ENCODE measurements at regions of chr9 and their contacts with region 1.

Region 1: GRCh38 chr9:109880277-109881169 is 100.5 kb downstream of the PALM2AKAP2 start:
- DNase-seq: peak; percentile 39 to 72
- H3K4me3 ChIP-seq: no peak overlapping the region
- H3K27ac ChIP-seq: no peak overlapping the region
- H3K4me1 ChIP-seq: peaks cover 0 to 4% (median 0%) of the 10 kb centered on the region in 4 experiments; a peak in 3 of 7 replicates
- H3K27me3 ChIP-seq: no peaks in the 10 kb centered on the region
- CTCF ChIP-seq: peak in 2 of 3 experiments; percentile 48 to 78; a peak in 3 of 4 replicates
- EP300 ChIP-seq: no peak
- POLR2A ChIP-seq: no peak
- RAD21 ChIP-seq: peak; percentile 38 to 46; a peak in 3 of 4 replicates

Region 2: GRCh38 chr9:109542906-109543305 is 337.6 kb before region 1 on chr9:
- CTCF ChIA-PET with region 1: no interaction called
- POLR2A ChIA-PET with region 1: no interaction called
- DNase-seq: no peak
- H3K4me3 ChIP-seq: no peak overlapping the region
- H3K27ac ChIP-seq: no peak overlapping the region
- H3K4me1 ChIP-seq: no peaks in the 10 kb centered on the region
- H3K27me3 ChIP-seq: no peaks in the 10 kb centered on the region; a peak in 1 of 7 replicates
- CTCF ChIP-seq: no peak
- EP300 ChIP-seq: no peak
- POLR2A ChIP-seq: no peak
- RAD21 ChIP-seq: no peak

Region 3: DNA sequence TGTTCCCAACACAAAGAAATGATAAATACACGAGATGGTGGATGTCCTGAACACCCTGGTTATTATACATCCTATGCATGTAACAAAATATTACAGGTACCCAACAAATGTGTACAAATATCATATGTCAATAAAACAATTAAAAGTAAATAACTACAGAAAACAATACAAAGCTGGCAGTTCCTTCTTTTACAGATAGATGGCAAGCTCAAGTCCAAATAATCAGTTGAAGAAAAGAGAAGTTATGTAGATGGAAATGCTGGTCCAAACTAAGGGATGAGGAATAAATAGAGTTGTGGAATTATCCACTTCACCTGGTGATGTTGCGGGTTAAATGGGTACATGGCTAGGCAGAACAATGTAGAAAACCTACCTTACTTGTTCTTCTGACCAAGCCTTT is 21.1 kb before region 1 on chr9:
- CTCF ChIA-PET with region 1: interaction called, 12 read pairs
- POLR2A ChIA-PET with region 1: no interaction called
- DNase-seq: no peak
- H3K4me3 ChIP-seq: no peak overlapping the region
- H3K27ac ChIP-seq: no peak overlapping the region
- H3K4me1 ChIP-seq: peaks cover 0 to 4% (median 1%) of the 10 kb centered on the region in 4 experiments; a peak in 3 of 7 replicates
- H3K27me3 ChIP-seq: no peaks in the 10 kb centered on the region
- CTCF ChIP-seq: no peak
- EP300 ChIP-seq: no peak
- POLR2A ChIP-seq: no peak
- RAD21 ChIP-seq: no peak

Region 4: DNA sequence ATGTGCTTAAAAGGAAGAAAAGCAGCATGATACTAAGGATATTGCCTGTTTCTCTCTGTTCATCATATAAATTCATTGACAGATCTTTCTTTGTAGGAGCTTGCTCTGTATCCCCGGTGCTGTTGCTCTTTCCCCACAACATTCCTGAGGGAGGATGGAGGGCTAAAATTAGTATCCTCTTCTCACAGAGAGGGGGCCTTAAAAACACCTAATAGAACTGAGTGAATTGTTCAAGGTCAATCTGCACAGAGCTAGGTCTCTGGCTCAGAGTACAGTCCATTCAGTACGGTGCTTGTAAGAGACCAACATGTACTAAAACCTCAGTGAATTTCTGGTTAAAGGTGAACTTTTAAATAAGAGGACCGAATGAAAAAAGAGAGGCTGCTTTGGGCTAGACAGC is 11.8 kb before region 1 on chr9:
- CTCF ChIA-PET with region 1: interaction called, 15 read pairs
- POLR2A ChIA-PET with region 1: no interaction called
- DNase-seq: no peak
- H3K4me3 ChIP-seq: no peak overlapping the region
- H3K27ac ChIP-seq: no peak overlapping the region
- H3K4me1 ChIP-seq: peaks cover 0 to 4% (median 0%) of the 10 kb centered on the region in 4 experiments; a peak in 1 of 7 replicates
- H3K27me3 ChIP-seq: no peaks in the 10 kb centered on the region
- CTCF ChIP-seq: no peak
- EP300 ChIP-seq: no peak
- POLR2A ChIP-seq: no peak
- RAD21 ChIP-seq: no peak

Region 5: DNA sequence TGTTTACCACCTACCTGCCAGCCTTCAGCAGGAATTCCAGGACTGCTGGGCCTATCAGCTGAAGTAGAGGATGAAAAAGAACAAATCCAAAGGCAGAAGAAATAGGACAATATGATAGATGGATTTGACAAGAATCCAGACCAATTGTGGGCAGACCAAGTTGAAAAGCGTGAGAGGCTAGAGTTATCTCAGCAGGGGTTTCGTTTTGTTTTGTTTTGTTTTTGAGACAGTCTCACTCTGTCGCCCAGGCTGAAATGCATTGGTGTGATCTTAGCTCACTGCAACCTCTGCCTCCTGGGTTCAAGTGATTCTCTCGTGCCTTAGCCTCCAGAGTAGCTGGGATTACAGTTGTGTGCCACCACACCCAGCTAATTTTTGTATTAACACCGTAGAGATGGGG is 12.7 kb after region 1 on chr9:
- CTCF ChIA-PET with region 1: interaction called, 14 read pairs
- POLR2A ChIA-PET with region 1: no interaction called
- DNase-seq: no peak
- H3K4me3 ChIP-seq: no peak overlapping the region
- H3K27ac ChIP-seq: no peak overlapping the region
- H3K4me1 ChIP-seq: peaks cover 0 to 2% (median 0%) of the 10 kb centered on the region in 4 experiments; a peak in 1 of 7 replicates
- H3K27me3 ChIP-seq: no peaks in the 10 kb centered on the region
- CTCF ChIP-seq: no peak
- EP300 ChIP-seq: no peak
- POLR2A ChIP-seq: no peak
- RAD21 ChIP-seq: no peak

Region 6: DNA sequence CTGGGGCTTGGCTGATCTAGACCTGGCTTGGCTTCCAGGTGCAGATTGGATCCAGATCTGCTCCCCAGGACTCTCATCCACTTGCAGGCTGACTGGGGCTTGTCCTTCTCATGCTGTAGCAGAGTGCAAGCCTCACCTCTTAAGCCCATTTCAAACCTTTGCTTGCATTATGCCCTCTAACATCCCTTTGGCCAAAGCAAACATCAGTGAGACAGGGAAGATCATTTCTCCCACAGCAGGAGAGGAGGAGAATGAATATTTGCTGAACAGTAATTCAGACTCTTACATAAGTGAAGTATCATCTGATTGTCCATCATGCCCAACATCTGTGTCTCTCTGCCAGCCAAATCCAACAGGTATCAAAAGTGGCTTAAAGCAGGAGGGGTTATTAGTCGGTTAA is 132.5 kb after region 1 on chr9:
- CTCF ChIA-PET with region 1: no interaction called
- POLR2A ChIA-PET with region 1: no interaction called
- DNase-seq: no peak
- H3K4me3 ChIP-seq: no peak overlapping the region
- H3K27ac ChIP-seq: no peak overlapping the region
- H3K4me1 ChIP-seq: no peaks in the 10 kb centered on the region
- H3K27me3 ChIP-seq: no peaks in the 10 kb centered on the region
- CTCF ChIP-seq: no peak
- EP300 ChIP-seq: no peak
- POLR2A ChIP-seq: no peak
- RAD21 ChIP-seq: no peak

Measured in H1 (cell line).